ENCODE measurements at regions of chr4 and their contacts with region 1.

Region 1: DNA sequence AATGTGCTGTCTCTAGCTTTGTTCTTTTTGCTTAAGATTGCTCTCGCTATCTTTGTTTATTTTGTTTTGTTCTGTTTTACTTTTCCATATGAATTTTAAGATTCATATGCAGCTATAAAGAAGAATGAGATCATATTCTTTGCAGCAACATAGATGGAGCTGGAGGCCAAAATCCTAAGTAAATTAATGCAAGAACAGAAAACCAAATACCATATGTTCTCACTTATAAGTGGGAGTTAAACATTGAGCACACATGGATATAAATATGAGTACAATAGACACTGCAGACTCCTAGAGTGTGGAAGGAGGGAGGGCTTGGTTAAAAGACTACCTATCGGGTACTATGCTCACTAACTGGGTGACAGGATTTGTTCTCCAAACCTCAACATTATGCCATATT is 237.8 kb downstream of the TRAM1L1 start:
- DNase-seq: no peak
- ATAC-seq: no peak
- H3K4me3 ChIP-seq: no peak overlapping the region
- H3K27ac ChIP-seq: no peak overlapping the region
- H3K4me1 ChIP-seq: no peaks in the 10 kb centered on the region
- H3K27me3 ChIP-seq: no peaks in the 10 kb centered on the region
- CTCF ChIP-seq: no peak
- POLR2A ChIP-seq: no peak

Region 2: DNA sequence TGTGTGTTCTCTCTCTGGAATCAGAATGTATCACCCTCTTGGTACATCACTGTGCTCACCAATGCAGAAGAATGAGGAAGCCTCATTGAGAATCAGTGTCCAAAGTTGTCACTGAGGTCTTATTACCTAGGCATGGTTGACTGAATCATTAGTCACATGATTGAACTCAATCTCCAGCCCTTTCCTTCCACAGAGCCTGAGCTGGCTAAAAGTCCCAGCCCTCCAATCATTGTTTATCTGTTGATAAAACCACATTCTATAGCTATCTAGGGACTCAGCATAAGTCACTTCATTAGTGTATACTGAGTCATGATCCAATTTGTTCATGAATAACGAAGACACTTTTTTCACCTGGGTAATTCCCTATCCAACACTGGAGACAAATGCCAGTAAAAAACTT is 159.1 kb before region 1 on chr4:
- intact Hi-C with region 1: no loop called
- DNase-seq: no peak
- ATAC-seq: no peak
- H3K4me3 ChIP-seq: no peak overlapping the region
- H3K27ac ChIP-seq: no peak overlapping the region
- H3K4me1 ChIP-seq: no peaks in the 10 kb centered on the region
- H3K27me3 ChIP-seq: no peaks in the 10 kb centered on the region
- CTCF ChIP-seq: no peak
- POLR2A ChIP-seq: no peak

Region 3: DNA sequence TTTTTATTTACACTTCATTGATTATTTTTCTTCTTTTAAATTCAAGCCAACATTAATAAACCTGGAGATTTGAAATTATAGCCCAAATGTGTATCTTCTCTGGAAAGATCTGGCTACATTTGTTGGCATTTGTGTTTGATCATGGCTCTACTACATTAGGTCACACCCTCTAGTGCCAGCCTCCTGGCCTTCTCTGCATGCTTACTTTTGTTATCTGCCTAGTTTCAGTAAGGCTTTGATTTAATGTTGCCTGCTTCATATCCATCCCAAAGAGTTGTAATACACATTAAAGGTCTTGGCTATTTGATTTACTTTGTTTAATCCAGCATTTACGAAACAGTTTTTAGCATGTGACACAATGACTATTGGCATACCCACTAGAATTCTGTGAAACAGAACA is 13.3 kb after region 1 on chr4:
- intact Hi-C with region 1: loop called in 1 of 10 experiments (anchors 1 kb)
- DNase-seq: no peak
- ATAC-seq: no peak
- H3K4me3 ChIP-seq: no peak overlapping the region
- H3K27ac ChIP-seq: no peak overlapping the region
- H3K4me1 ChIP-seq: no peaks in the 10 kb centered on the region
- H3K27me3 ChIP-seq: no peaks in the 10 kb centered on the region
- CTCF ChIP-seq: no peak
- POLR2A ChIP-seq: no peak

Measured in heart left ventricle (tissue), 16 donors.